WTC11 (cell line): ENCODE measurements at regions of chr6 and their contacts with region 1.

Region 1: DNA sequence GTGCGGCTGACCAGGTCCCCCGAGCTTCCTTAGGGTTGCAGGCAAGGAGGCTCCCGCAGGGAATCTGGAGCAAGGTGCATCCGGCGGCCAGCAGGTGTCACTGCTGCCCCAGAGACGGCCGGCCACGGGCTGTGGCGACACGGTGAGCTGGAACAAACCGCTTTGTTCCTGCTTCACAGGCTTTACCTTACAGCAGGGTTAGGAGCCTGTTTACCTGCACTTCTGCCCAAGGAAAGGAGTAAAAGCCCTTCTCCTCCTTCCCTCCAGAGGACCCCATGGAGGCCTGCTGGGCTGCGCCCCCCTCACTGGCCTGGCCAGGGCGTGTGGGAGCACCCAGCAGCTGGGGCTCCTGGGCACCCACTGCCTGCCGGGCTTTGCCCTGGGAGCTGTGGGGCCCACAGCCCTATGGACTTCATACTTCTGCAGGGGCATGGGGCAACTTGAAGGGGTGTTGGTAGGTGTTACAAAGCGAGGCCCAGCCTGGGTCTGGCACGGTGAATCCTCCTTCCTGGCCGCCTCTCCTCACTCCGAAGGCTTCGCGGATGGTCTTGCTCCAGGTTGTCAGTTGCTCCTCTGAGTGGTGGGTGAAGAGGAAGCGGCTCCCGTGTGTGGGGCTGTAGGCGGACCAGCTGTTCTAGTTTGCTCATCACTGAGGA is 88.4 kb downstream of the CDC5L start:
- DNase-seq: peak; percentile 92
- ATAC-seq: peak; percentile 83
- H3K4me3 Mint-ChIP-seq: no peak overlapping the region
- H3K27ac Mint-ChIP-seq: no peak overlapping the region
- H3K4me1 Mint-ChIP-seq: peaks cover 41% of the 10 kb centered on the region
- H3K27me3 Mint-ChIP-seq: peaks cover 2% of the 10 kb centered on the region; the same call in 1 of the 2 replicates
- CTCF ChIP-seq: peak; percentile 89

Region 2: DNA sequence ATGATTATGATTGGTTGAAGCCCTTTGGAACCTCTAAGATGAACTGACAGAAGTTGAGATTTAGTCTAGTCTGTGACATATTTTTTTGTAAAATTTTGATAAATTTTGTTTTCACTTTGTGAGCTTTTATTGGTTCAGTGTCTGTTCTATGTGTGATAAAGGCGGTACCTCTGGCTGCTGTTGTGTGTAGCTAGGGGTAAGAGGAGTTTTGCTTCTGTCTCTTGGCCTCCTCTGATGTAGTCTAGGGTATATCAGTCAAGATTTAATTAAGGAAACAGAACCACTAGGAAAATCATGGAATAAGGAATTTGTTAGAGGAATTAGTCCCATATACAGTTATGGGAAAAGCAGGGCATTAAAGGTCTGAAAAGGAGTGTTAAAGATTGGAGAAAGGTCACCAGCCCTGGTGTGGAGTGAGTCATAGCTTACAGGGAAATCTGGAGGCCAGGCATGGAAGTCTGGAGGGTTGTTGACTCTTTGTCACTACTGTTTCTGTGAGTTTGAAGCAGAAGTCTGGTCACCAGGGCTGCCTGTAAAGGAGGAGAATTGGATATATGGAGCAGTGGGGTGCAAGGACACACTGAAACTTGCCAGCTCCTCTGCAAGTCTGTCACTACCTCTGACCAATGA is 59.9 kb before region 1 on chr6:
- CTCF ChIA-PET with region 1: no interaction called
- POLR2A ChIA-PET with region 1: no interaction called
- DNase-seq: no peak
- ATAC-seq: no peak
- H3K4me3 Mint-ChIP-seq: no peak overlapping the region
- H3K27ac Mint-ChIP-seq: no peak overlapping the region
- H3K4me1 Mint-ChIP-seq: no peaks in the 10 kb centered on the region
- H3K27me3 Mint-ChIP-seq: no peaks in the 10 kb centered on the region
- CTCF ChIP-seq: no peak

Region 3: GRCh38 chr6:44489910-44490604 is 14.2 kb after region 1 on chr6:
- CTCF ChIA-PET with region 1: interaction called, 82 read pairs
- POLR2A ChIA-PET with region 1: interaction called, 4 read pairs
- DNase-seq: no peak
- ATAC-seq: no peak
- H3K4me3 Mint-ChIP-seq: no peak overlapping the region
- H3K27ac Mint-ChIP-seq: no peak overlapping the region
- H3K4me1 Mint-ChIP-seq: peaks cover 26% of the 10 kb centered on the region
- H3K27me3 Mint-ChIP-seq: no peaks in the 10 kb centered on the region
- CTCF ChIP-seq: no peak

Region 4: DNA sequence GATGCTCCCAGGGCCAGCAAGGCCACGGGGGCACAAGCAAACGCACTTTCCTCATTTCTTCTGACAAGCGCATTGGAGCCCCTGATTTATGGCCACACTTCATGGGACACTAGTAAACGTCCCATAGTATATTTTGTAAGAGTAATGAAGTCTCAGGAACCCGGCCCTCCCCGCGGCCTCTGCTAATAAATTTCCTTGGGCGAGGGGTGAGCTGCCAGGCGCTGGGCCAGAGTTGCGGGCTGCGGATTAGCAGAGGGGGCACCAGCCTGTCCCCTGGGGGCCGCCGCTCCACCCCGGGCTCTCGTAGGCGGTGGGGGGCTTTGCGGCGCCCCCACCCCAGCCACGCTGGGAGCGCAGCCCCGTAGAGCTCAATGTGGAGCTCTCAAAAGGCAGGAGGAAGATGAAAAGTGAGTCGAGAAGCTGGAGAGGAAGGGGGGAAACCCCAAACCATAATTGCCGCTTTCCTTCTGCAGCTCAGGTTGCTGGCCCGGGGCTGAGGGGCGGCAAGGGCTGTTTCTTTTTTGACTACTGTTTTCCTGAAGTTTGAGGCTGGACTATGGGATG is 85.2 kb after region 1 on chr6:
- CTCF ChIA-PET with region 1: interaction called, 20 read pairs
- POLR2A ChIA-PET with region 1: no interaction called
- DNase-seq: no peak
- ATAC-seq: peak; percentile 9; the same call in 1 of the 2 replicates
- H3K4me3 Mint-ChIP-seq: no peak overlapping the region
- H3K27ac Mint-ChIP-seq: no peak overlapping the region
- H3K4me1 Mint-ChIP-seq: peaks cover 30% of the 10 kb centered on the region
- H3K27me3 Mint-ChIP-seq: no peaks in the 10 kb centered on the region
- CTCF ChIP-seq: no peak

Region 5: GRCh38 chr6:44621846-44622245 is 145.9 kb after region 1 on chr6:
- CTCF ChIA-PET with region 1: interaction called, 186 read pairs
- POLR2A ChIA-PET with region 1: interaction called, 3 read pairs
- DNase-seq: no peak
- ATAC-seq: no peak
- H3K4me3 Mint-ChIP-seq: no peak overlapping the region
- H3K27ac Mint-ChIP-seq: no peak overlapping the region
- H3K4me1 Mint-ChIP-seq: peaks cover 62% of the 10 kb centered on the region
- H3K27me3 Mint-ChIP-seq: peaks cover 8% of the 10 kb centered on the region
- CTCF ChIP-seq: no peak

Region 6: GRCh38 chr6:44662461-44663121 is 186.7 kb after region 1 on chr6:
- CTCF ChIA-PET with region 1: interaction called, 97 read pairs
- POLR2A ChIA-PET with region 1: no interaction called
- DNase-seq: peak; percentile 76
- ATAC-seq: peak; percentile 79
- H3K4me3 Mint-ChIP-seq: no peak overlapping the region
- H3K27ac Mint-ChIP-seq: peak overlapping the region; percentile 97
- H3K4me1 Mint-ChIP-seq: peaks cover 75% of the 10 kb centered on the region
- H3K27me3 Mint-ChIP-seq: no peaks in the 10 kb centered on the region; the same call in 1 of the 2 replicates
- CTCF ChIP-seq: no peak

Region 7: DNA sequence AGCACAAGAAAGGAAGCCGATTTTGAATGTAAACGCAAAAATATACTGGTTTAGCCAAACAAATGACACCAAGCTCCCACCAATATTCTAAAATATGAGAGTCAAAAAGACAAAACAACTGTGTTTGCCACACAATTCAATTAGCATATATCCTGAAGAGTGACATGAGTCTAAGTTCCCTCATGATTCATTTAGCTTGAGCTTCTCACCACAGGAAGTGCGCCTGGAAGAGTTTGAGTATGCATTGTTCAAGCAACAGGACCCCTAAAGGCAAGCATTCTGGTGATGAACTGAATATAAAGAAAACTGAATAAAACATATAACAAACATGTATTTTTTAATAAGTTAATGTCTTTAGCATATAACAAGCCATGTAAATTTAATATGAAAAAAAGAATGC is 737.1 kb after region 1 on chr6:
- CTCF ChIA-PET with region 1: no interaction called
- POLR2A ChIA-PET with region 1: no interaction called
- DNase-seq: no peak
- ATAC-seq: no peak
- H3K4me3 Mint-ChIP-seq: no peak overlapping the region
- H3K27ac Mint-ChIP-seq: peak overlapping the region; percentile 67
- H3K4me1 Mint-ChIP-seq: peaks cover 25% of the 10 kb centered on the region
- H3K27me3 Mint-ChIP-seq: no peaks in the 10 kb centered on the region
- CTCF ChIP-seq: no peak

Region 8: DNA sequence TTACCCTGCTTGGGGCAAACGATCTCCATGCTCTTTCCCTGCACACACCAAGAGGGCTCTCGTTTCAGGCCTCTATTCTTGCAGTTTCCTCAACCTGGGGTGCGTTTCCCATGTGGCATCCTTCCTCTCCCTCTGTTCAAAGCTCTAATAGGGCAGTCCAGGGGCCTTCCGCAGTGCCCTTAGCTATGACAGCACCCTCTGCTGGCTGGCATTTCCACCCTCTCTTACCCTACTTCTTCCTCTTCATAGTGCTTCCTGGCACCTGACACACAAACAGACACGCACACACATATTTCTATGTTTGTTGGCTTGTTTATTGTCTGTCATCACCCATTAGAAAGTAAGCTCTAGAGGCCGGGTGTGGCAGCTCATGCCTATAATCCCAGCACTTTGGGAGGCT is 1245.8 kb after region 1 on chr6:
- CTCF ChIA-PET with region 1: interaction called, 10 read pairs
- POLR2A ChIA-PET with region 1: no interaction called
- DNase-seq: peak; percentile 57
- ATAC-seq: peak; percentile 84
- H3K4me3 Mint-ChIP-seq: no peak overlapping the region
- H3K27ac Mint-ChIP-seq: no peak overlapping the region
- H3K4me1 Mint-ChIP-seq: no peaks in the 10 kb centered on the region
- H3K27me3 Mint-ChIP-seq: no peaks in the 10 kb centered on the region; the same call in 1 of the 2 replicates
- CTCF ChIP-seq: no peak